Activated CD8-positive, alpha-beta T cell treated with anti-CD3 and anti-CD28 coated beads for 36 hours (primary cell): ENCODE measurements at regions of chr16 and their contacts with region 1.

Region 1: DNA sequence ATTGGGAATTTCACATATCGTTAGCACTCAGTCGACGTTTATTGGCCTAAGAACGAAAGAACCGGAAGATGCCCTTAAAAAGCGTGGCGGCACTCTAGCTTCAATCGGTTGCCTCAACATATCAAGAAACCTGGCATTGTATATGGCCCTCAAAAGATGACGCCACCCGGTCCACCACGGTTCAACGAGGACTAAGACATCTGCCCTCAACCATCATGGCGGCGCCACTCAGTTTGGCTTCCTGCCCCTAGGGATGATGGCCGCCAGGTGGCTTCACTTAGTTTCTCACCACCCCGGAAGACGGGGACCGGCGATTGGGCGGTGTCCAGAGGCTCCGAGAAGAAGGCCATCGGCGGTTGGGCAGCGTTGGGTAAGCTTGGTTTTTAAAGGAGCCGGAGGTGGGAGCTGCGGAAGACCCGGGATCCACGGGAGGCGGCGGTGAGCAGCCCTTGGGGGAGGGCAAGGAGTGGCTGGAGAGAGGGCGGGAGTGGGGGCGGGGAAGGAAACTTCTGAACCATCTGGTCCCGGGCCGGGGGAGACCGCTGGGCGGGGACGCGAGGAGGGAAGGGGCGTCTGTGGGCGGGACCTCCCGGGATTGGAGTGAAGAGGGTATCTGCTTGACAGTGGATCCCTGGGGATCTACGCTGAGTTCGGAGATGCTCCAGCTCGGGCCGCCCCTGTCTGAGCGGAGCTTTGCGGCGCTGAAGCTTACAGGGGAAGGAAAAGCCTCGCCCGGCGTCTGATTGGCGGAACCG is at the start of gene PRR14:
- DNase-seq: peak; percentile 100
- ATAC-seq: peak; percentile 82
- H3K4me3 Mint-ChIP-seq: peak within 1 kb of the TSS; percentile 88
- H3K27ac Mint-ChIP-seq: peak within 1 kb of the TSS; percentile 91
- H3K4me1 Mint-ChIP-seq: peaks cover 27% of the 10 kb centered on the region
- H3K27me3 Mint-ChIP-seq: no peaks in the 10 kb centered on the region
- CTCF ChIP-seq: no peak
- total RNA-seq, gene PRR14: 74.0 to 76.6 TPM

Region 2: DNA sequence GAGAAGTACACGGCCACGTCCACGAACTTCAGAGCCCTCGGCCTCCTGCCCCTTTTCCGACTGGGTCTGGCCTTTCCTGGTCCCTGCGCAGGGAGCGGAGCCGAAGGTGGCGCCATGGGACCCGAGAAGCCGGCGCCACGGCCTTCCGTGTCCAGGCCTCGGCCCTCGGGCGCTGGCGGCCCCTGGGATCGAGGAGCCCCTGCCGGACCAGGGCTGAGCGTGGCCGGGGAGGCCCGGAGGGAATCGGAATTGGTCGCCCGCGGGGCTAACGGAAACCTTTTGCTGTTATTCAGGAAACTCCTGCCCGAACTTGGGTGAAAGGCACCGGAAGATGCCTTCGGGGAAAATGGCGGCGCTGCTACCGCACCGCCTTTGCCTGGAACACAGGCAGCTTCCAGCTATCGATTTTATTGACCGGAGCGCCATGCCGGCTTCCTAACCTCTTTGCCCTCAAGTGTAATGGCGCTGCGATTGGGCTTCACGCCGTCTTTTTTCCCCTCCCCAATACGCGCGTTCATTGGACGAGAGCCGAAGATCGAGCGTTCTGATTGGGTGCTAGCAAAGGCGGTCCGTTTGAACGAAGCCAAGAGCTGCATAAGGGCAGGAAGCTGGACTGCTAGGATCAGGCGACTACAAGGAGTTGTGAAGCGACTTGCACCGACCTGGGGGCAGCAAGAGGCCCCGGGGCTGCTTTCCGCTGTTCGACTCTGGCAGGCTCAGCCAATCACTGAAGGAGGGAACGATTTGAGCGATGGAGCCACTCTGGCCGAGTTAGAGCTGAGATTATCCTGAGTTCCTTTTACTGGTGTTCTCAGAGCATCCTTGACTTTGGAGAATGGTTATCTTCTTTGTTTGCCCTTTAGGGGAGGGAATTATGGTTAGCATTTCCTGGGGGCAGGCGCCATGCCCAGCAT is 40.4 kb before region 1 on chr16 and contains the start of gene ZNF689:
- CTCF ChIA-PET with region 1: interaction called, 7 read pairs
- POLR2A ChIA-PET with region 1: interaction called, 11 read pairs
- intact Hi-C with region 1: no loop called
- DNase-seq: peak; percentile 96
- ATAC-seq: peak; percentile 86
- H3K4me3 Mint-ChIP-seq: peak within 1 kb of the TSS; percentile 89
- H3K27ac Mint-ChIP-seq: peak within 1 kb of the TSS; percentile 93
- H3K4me1 Mint-ChIP-seq: peaks cover 15% of the 10 kb centered on the region
- H3K27me3 Mint-ChIP-seq: no peaks in the 10 kb centered on the region
- CTCF ChIP-seq: no peak
- total RNA-seq, gene ZNF689: 9.8 to 11.3 TPM

Region 3: DNA sequence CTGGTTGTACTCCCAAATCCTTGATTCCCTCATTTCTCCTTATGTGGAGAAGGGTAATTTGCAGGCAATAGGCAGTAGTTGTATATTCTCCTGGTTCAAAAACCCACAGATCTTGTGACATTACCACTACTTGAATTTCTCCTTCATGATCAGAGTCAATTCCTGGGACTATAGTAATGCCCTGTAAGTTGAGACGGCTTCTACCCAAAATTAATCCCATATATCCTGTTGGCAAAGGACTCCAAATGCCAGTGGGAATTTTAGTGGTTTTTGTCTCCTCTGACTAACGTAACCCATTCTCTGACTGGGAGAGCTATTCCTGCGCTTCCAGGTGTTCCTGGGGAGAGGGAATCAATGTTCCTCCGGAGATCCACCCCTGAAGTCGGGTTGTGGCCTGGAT is 28.8 kb before region 1 on chr16:
- CTCF ChIA-PET with region 1: no interaction called
- POLR2A ChIA-PET with region 1: no interaction called
- intact Hi-C with region 1: no loop called
- DNase-seq: no peak
- ATAC-seq: no peak
- H3K4me3 Mint-ChIP-seq: no peak overlapping the region
- H3K27ac Mint-ChIP-seq: no peak overlapping the region
- H3K4me1 Mint-ChIP-seq: no peaks in the 10 kb centered on the region
- H3K27me3 Mint-ChIP-seq: no peaks in the 10 kb centered on the region
- CTCF ChIP-seq: no peak

Region 4: GRCh38 chr16:31022544-31023251 is 372.2 kb after region 1 on chr16:
- CTCF ChIA-PET with region 1: no interaction called
- POLR2A ChIA-PET with region 1: no interaction called
- intact Hi-C with region 1: no loop called
- DNase-seq: no peak
- ATAC-seq: no peak
- H3K4me3 Mint-ChIP-seq: no peak overlapping the region
- H3K27ac Mint-ChIP-seq: peak overlapping the region; percentile 3
- H3K4me1 Mint-ChIP-seq: peaks cover 5% of the 10 kb centered on the region
- H3K27me3 Mint-ChIP-seq: no peaks in the 10 kb centered on the region
- CTCF ChIP-seq: no peak